Dorsolateral prefrontal cortex (tissue), 120 donors: ENCODE measurements at regions of chr12 and their contacts with region 1.

Region 1: DNA sequence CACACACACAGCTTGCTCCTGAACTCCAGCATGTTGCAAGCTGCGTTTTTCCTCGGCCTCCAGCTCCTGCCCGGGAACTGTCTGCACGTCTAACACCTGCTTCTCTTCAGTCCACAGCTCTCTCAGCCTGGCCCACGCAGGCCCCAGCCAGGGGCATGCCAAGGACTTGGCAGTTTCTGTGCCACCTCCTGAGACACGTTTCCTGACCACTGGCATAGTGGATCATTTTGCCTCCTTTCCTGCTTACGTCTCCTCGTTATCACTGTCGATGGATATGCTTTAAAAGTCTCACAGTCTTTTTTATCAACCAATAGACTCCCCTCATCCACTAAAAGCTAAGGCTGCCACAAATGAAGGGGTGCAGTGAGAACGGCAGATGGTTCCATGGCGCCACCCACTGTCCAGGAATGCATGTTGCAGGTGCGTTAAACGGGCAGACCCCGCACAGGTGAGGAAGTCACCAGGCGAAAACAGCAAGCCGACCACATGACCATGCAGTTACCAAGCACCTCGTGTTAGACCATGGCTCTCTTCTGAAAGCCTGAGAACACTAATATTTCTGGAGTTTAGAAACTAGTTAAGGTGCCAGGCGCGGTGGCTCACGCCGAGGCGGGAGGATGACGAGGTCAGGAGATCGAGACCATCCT is 14.7 kb upstream of the TEAD4 start:
- DNase-seq: peak; percentile 30 to 86 (median 60)
- H3K4me3 ChIP-seq: peak overlapping the region in 9 of 59 donors; percentile 2 to 41 (median 14)
- H3K27ac ChIP-seq: peak overlapping the region in 13 of 59 donors; percentile 7 to 73 (median 45)
- H3K27me3 ChIP-seq: no peaks in the 10 kb centered on the region
- CTCF ChIP-seq: peak; percentile 48 to 91 (median 78)

Region 2: DNA sequence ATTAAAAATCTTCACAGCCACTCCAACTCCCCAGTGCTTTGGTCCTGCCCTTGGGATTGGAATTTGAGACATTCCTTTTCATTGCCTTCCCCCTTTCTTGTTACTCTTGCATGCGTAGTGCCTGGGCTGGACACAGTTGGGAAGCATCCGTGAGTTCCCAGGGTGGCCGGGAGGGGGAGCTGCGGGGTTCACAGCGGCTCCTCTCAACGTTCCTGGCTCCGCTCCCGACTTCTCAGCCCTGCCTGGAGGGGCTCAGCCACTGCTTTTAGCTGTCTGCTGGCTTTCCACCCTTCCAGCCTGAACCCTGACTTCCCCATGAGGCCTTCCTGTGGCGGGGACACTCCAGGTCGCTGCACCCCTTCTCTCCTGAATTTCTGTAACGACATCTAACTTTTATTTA is 90.9 kb before region 1 on chr12:
- intact Hi-C with region 1: loop called (anchors 5 to 10 kb)
- DNase-seq: peak; percentile 77 to 88 (median 84)
- H3K4me3 ChIP-seq: peak overlapping the region in 3 of 59 donors; percentile 16 to 38 (median 24)
- H3K27ac ChIP-seq: peak overlapping the region in 1 of 59 donors; percentile 19
- H3K27me3 ChIP-seq: no peaks in the 10 kb centered on the region
- CTCF ChIP-seq: peak; percentile 39 to 90 (median 83)

Region 3: DNA sequence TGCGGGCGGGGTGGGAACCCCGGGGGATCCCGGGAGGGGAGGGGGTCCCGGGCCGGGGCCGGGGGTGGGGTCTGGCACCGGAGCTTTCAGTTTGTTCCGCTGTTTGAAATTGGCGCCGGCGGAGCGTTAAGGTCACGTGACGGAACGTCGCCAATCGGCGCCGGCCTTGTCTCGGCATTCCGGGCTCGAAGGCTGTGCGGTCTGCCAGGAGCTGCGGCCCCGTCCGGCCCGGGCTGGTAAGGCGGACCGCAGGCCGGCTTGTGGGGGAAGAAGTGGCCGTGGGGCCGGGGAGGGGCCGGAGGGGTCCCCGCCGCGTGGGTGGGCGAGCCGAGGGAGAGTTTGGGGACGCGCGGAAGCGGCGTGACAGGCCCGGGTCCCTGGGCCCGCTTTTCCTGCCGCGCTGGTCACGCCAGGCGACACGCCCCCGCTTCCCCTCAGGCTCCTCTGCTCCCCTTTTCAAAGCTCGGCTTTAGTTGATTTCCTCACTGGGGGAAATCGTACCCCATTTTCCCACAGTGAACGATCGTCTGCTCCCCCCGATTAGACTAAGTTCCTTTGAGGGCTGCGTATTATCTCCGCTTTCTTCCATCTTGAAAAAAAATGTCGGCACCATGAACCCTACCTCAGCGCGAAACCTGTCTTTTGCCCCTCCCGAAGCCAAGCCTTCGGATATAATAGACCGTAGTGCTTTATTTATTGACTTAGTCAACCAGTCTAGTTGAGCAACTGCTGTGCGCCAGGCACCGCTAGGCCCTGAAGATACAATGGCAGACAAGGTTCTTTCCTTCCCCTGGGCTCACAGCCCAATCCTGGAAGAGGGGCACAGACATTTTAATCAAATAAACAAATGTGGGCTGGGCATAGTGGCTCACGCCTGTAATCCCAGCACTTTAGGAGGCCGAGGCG is 67.2 kb before region 1 on chr12 and contains the starts of genes FOXM1 and RHNO1:
- intact Hi-C with region 1: loop called in 1 of 2 experiments (anchors 10 kb)
- DNase-seq: peak; percentile 91 to 97 (median 94)
- H3K4me3 ChIP-seq: peak within 1 kb of the TSS; percentile 62 to 99 (median 89)
- H3K27ac ChIP-seq: peak within 1 kb of the TSS; percentile 62 to 98 (median 93)
- H3K27me3 ChIP-seq: no peaks in the 10 kb centered on the region
- CTCF ChIP-seq: peak in 49 of 56 donors; percentile 14 to 61 (median 39)
- total RNA-seq, gene FOXM1: 0.18 to 3.6 (median 0.89) TPM in 118 of 120 experiments, not detected in the others
- total RNA-seq, gene RHNO1: 7.0 to 28.4 (median 14.3) TPM

Region 4: GRCh38 chr12:2884810-2885209 is 59.7 kb before region 1 on chr12:
- intact Hi-C with region 1: loop called (anchors 5 to 10 kb)
- DNase-seq: no peak
- H3K4me3 ChIP-seq: no peak overlapping the region
- H3K27ac ChIP-seq: peak overlapping the region in 32 of 59 donors; percentile 4 to 72 (median 38)
- H3K27me3 ChIP-seq: no peaks in the 10 kb centered on the region
- CTCF ChIP-seq: no peak